ENCODE measurements at regions of chr14 and their contacts with region 1.

Region 1: DNA sequence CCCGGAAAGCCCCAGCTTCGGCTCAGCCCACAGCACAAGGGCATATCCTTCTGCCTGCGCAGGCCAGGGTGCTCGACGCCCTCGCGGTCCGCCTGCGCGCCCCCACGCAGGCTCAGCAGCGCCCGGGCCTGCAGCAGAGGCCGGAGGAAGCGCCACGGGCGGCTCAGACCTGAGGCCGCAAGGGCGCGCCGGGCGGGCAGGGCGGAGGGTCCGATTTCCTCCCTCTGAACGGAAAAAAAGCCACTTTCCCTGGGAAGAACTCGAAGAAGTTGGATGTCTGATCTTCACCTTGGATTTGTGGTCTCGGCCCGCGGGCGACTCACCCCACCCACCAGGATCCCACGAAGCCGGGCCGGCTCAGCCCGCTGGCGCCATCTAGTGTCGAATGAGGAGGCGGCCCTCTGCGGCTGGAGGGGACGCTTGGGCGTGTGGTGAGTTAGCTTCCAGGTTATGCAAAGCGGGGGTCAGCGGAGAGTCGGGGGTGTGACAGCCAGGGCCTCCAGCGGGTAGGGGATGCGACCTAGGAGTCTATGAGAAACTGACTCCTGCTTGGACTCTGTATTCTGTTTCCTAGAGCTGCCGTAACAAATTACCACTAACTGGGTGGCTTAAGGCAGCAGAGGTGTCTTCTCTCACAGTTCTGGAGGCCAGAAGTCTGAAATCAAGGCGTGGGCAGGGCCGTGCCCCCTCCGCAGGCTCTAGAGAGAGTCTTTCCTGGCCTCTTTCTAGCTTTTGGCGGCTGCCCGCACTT is 40.0 kb upstream of the SRSF5 start:
- DNase-seq: peak; percentile 65 to 90 (median 77)
- H3K4me3 ChIP-seq: peak overlapping the region; percentile 27 to 73 (median 59)
- H3K27ac ChIP-seq: peak overlapping the region in 33 of 59 donors; percentile 0 to 87 (median 46)
- H3K27me3 ChIP-seq: no peaks in the 10 kb centered on the region
- CTCF ChIP-seq: peak; percentile 77 to 100 (median 98)

Region 2: DNA sequence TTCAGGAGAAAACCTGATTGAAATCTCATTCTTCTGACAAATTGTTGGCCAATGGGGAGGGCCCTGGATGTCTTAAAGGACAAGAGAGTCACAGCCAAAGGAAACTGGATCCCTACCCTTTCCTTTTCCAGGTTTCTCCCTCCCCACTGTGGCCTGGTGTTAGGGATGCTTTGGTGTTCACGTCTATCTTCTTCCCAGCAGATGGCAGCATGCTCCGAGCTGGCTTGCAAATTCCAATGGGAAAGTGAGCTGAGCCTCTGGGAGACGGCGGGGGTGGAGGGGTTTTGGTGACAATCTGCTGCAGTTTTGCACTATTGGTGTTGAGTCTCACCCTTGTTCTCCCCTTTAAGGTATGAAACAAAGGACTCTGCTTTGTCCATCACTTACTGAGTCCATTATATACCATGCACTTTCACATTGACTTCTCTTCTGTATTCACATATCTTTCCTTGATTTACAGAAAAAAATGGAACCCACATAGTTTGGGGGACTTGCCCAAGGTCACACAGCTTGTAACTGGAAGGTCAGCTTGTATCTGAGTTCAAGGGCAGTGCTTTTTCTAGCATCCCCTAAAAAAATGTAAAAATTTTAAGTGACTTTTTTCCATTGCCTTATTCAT is 191.6 kb before region 1 on chr14:
- intact Hi-C with region 1: loop called in 1 of 2 experiments (anchors 2 kb)
- DNase-seq: peak; percentile 34 to 79 (median 70)
- H3K4me3 ChIP-seq: no peak overlapping the region
- H3K27ac ChIP-seq: no peak overlapping the region
- H3K27me3 ChIP-seq: no peaks in the 10 kb centered on the region
- CTCF ChIP-seq: peak; percentile 19 to 82 (median 64)

Region 3: DNA sequence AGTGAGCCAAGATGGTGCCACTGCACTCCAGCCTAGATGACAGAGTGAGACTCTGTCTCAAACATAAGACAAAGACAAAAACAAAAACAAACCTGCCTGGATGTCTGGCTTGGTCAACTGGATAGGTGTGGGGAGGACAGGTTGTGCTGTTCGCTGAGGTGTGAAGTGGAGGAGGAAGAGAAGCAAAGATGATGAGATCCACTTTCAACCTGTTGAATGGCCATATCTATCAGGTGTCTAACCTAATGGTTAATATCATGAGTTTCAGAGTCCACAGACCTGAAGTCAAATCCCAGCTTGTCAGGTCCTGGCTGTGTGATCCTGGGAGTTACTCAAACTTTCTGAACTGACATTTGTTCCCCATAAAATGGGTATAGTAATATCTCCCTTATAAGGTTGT is 142.5 kb before region 1 on chr14:
- intact Hi-C with region 1: loop called (anchors 1 to 2 kb)
- DNase-seq: no peak
- H3K4me3 ChIP-seq: no peak overlapping the region
- H3K27ac ChIP-seq: no peak overlapping the region
- H3K27me3 ChIP-seq: no peaks in the 10 kb centered on the region
- CTCF ChIP-seq: no peak